ENCODE measurements at regions of chr11 and their contacts with region 1.

Region 1: GRCh38 chr11:61384271-61385242 is 7.8 kb upstream of the TMEM216 start:
- DNase-seq: peak in 1 of 2 experiments; percentile 53
- H3K4me3 ChIP-seq: no peak overlapping the region
- H3K27ac ChIP-seq: no peak overlapping the region
- H3K4me1 ChIP-seq: no peaks in the 10 kb centered on the region
- H3K27me3 ChIP-seq: no peaks in the 10 kb centered on the region
- CTCF ChIP-seq: peak; percentile 33 to 71 (median 68)
- EP300 ChIP-seq: no peak
- POLR2A ChIP-seq: no peak
- RAD21 ChIP-seq: peak; percentile 74 to 79

Region 2: DNA sequence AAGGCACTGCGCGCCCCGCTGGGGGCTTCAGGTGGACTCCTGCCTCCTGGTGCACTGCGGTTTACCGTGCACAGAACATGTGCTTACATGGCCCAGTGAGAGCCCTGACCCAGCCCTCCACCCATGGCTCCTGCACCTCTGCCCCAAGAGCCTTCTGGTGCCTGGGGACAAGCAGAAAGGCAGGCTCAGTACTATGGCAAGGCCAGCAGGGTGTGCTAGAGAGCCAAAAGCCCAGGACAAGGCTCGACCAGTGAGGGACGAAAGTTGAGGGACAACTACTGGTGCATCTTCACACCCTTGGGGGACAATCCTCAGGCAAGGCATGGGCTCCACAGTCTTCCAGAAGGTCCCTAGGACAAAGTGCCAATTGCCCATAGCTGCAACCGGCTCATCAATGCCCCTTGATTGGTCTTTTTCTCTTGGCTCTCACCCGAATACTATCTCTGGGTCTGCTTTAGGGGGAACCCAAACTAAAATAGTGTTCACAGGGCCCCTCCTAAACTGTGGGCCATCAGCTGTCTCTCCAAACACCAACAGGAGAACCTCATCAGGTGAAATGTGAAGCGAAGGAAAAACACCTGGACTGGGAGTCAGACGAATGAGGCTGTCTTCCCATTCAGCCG is 130.0 kb before region 1 on chr11:
- CTCF ChIA-PET with region 1: interaction called, 19 read pairs
- POLR2A ChIA-PET with region 1: interaction called, 3 read pairs
- DNase-seq: peak; percentile 38 to 89
- H3K4me3 ChIP-seq: no peak overlapping the region
- H3K27ac ChIP-seq: no peak overlapping the region
- H3K4me1 ChIP-seq: no peaks in the 10 kb centered on the region; a peak in 1 of 7 replicates
- H3K27me3 ChIP-seq: no peaks in the 10 kb centered on the region; a peak in 1 of 7 replicates
- CTCF ChIP-seq: peak; percentile 89 to 99 (median 99)
- EP300 ChIP-seq: no peak
- POLR2A ChIP-seq: no peak
- RAD21 ChIP-seq: peak; percentile 66 to 84

Region 3: GRCh38 chr11:61294717-61295595 is 89.6 kb before region 1 on chr11 and contains the start of gene VWCE:
- CTCF ChIA-PET with region 1: interaction called, 16 read pairs
- POLR2A ChIA-PET with region 1: interaction called, 3 read pairs
- DNase-seq: peak; percentile 53 to 86
- H3K4me3 ChIP-seq: peak within 1 kb of the TSS; percentile 54 to 82 (median 78)
- H3K27ac ChIP-seq: peak within 1 kb of the TSS; percentile 57
- H3K4me1 ChIP-seq: peaks cover 2 to 9% (median 8%) of the 10 kb centered on the region in 4 experiments
- H3K27me3 ChIP-seq: peaks cover 1 to 12% (median 7%) of the 10 kb centered on the region in 4 experiments; a peak in 6 of 7 replicates
- CTCF ChIP-seq: 0 out of 4 replicates have a peak, but pooled peaks of 1 of the 3 experiments have one; percentile 10
- EP300 ChIP-seq: no peak
- POLR2A ChIP-seq: peak in 1 of 2 experiments; percentile 26; a peak in 2 of 3 replicates
- RAD21 ChIP-seq: no peak; a peak in 1 of 4 replicates
- total RNA-seq, gene VWCE: 12.3 and 14.5 TPM in 2 replicates

Region 4: GRCh38 chr11:61332797-61333549 is 51.6 kb before region 1 on chr11 and contains the starts of genes DDB1 and TKFC:
- CTCF ChIA-PET with region 1: interaction called, 290 read pairs
- POLR2A ChIA-PET with region 1: interaction called, 1,106 read pairs
- DNase-seq: peak; percentile 84 to 99
- H3K4me3 ChIP-seq: peak within 1 kb of the TSS; percentile 79 to 96 (median 92)
- H3K27ac ChIP-seq: peak within 1 kb of the TSS; percentile 96
- H3K4me1 ChIP-seq: peaks cover 5 to 14% (median 9%) of the 10 kb centered on the region in 4 experiments
- H3K27me3 ChIP-seq: no peaks in the 10 kb centered on the region
- CTCF ChIP-seq: no peak
- EP300 ChIP-seq: no peak
- POLR2A ChIP-seq: peak; percentile 94 to 96
- RAD21 ChIP-seq: no peak
- total RNA-seq, gene DDB1: 275 and 283 TPM in 2 replicates
- total RNA-seq, gene TKFC: 53.5 and 56.0 TPM in 2 replicates

Region 5: GRCh38 chr11:61347916-61348461 is 36.6 kb before region 1 on chr11:
- CTCF ChIA-PET with region 1: interaction called, 55 read pairs
- POLR2A ChIA-PET with region 1: interaction called, 1,106 read pairs
- DNase-seq: no peak
- H3K4me3 ChIP-seq: no peak overlapping the region
- H3K27ac ChIP-seq: no peak overlapping the region
- H3K4me1 ChIP-seq: no peaks in the 10 kb centered on the region
- H3K27me3 ChIP-seq: no peaks in the 10 kb centered on the region
- CTCF ChIP-seq: no peak
- EP300 ChIP-seq: no peak
- POLR2A ChIP-seq: no peak; a peak in 1 of 3 replicates
- RAD21 ChIP-seq: no peak

Region 6: GRCh38 chr11:61361686-61362541 is 22.6 kb before region 1 on chr11 and contains the starts of genes CYB561A3 and TMEM138:
- CTCF ChIA-PET with region 1: interaction called, 199 read pairs
- POLR2A ChIA-PET with region 1: interaction called, 1,106 read pairs
- DNase-seq: peak; percentile 78 to 90
- H3K4me3 ChIP-seq: peak within 1 kb of the TSS; percentile 77 to 100 (median 86)
- H3K27ac ChIP-seq: peak within 1 kb of the TSS; percentile 100
- H3K4me1 ChIP-seq: no peaks in the 10 kb centered on the region
- H3K27me3 ChIP-seq: no peaks in the 10 kb centered on the region
- CTCF ChIP-seq: peak in 1 of 3 experiments; percentile 1; a peak in 1 of 4 replicates
- EP300 ChIP-seq: no peak
- POLR2A ChIP-seq: peak; percentile 94 to 99
- RAD21 ChIP-seq: no peak
- total RNA-seq, gene CYB561A3: 29.6 and 32.5 TPM in 2 replicates
- total RNA-seq, gene TMEM138: 32.9 and 35.3 TPM in 2 replicates

Region 7: DNA sequence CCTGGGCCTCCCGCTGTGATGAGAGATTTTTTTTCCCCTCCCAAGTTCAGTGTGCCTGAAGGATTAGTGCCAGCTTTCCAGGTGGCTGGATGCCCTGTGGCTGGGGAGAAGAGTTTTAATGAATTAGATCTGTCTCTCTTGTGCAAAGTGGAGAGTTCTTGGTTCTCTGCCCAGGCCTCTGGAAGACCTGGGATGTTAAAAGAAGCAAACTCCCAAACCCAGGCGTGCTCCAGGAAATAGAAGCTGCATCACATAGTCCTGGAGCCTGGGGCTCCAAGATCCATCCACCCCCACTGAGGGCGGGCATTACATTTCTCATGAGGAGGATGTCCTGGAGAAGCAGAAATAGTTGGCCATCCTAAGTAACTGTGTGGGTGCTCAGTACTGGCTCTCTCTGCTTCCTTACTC is 75.9 kb after region 1 on chr11:
- CTCF ChIA-PET with region 1: no interaction called
- POLR2A ChIA-PET with region 1: no interaction called
- DNase-seq: no peak
- H3K4me3 ChIP-seq: no peak overlapping the region
- H3K27ac ChIP-seq: no peak overlapping the region
- H3K4me1 ChIP-seq: no peaks in the 10 kb centered on the region
- H3K27me3 ChIP-seq: no peaks in the 10 kb centered on the region
- CTCF ChIP-seq: no peak
- EP300 ChIP-seq: no peak
- POLR2A ChIP-seq: no peak
- RAD21 ChIP-seq: no peak

Region 8: GRCh38 chr11:61477727-61478148 is 93.2 kb after region 1 on chr11:
- CTCF ChIA-PET with region 1: no interaction called
- POLR2A ChIA-PET with region 1: no interaction called
- DNase-seq: peak; percentile 47 to 94
- H3K4me3 ChIP-seq: no peak overlapping the region
- H3K27ac ChIP-seq: no peak overlapping the region
- H3K4me1 ChIP-seq: peaks cover 0 to 16% (median 8%) of the 10 kb centered on the region in 4 experiments; a peak in 5 of 7 replicates
- H3K27me3 ChIP-seq: no peaks in the 10 kb centered on the region
- CTCF ChIP-seq: peak; percentile 78 to 97 (median 89)
- EP300 ChIP-seq: no peak
- POLR2A ChIP-seq: no peak
- RAD21 ChIP-seq: peak; percentile 94 to 96

Measured in H1 (cell line).